Activated CD4-positive, alpha-beta memory T cell treated with anti-CD3 and anti-CD28 coated beads, Interleukin-2, amount 10 ng/mL, durations not matched to agents 7 days and 5 days (primary cell): ENCODE measurements at regions of chr17 and their contacts with region 1.

Region 1: DNA sequence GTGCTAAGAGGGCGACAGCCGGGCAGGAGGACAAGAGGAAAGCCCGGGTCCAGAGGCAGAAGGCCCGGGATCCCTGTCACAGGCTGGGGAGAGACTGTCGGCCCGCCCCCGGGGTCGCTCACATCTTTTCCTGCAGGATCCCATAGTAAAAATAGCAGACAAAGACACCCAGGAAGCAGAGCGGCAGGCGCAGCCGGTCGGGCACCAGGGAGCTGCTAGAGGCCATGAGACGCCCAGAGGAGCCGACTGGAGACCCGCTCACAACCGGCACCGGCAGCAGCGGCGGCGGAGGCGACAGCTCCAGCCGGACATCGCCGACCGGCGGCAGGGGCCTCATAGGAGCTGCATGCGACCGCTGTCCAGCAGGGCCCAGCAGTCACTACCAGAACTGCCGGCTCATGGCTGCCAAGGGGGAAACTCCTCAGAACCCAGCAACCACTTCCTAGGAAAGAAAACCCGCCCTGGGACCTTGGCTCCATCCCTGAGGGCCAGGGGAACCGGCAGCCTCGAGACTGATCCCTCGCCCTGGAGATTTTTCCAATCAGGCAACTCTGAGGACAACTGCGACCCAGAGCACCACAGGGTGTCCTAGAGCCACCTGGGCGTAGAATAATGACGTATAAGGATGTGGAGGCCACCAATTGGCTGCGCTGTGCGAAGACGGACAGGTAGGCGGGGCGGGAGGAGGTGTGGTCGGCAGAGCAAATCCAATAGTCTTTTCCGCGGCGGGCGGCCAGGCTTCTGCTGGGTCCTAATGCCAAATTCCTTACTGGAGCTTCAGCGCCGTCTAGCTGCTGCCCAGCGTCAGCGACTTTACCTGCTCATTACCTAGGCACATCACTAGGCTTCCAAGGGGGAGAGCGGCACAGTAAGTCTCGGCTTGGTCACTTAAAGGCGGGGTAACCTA is at the start of gene SLC35B1:
- DNase-seq: peak; percentile 99
- H3K4me3 Mint-ChIP-seq: peak within 1 kb of the TSS; percentile 90
- H3K27ac Mint-ChIP-seq: peak within 1 kb of the TSS; percentile 93
- H3K4me1 Mint-ChIP-seq: peaks cover 57% of the 10 kb centered on the region
- H3K27me3 Mint-ChIP-seq: no peaks in the 10 kb centered on the region
- total RNA-seq, gene SLC35B1: 50.4 TPM

Region 2: GRCh38 chr17:49471089-49471683 is 236.7 kb before region 1 on chr17:
- CTCF ChIA-PET with region 1: no interaction called
- POLR2A ChIA-PET with region 1: no interaction called
- DNase-seq: no peak
- H3K4me3 Mint-ChIP-seq: no peak overlapping the region
- H3K27ac Mint-ChIP-seq: no peak overlapping the region
- H3K4me1 Mint-ChIP-seq: no peaks in the 10 kb centered on the region
- H3K27me3 Mint-ChIP-seq: peaks cover 68% of the 10 kb centered on the region

Region 3: GRCh38 chr17:49567871-49568694 is 139.8 kb before region 1 on chr17:
- CTCF ChIA-PET with region 1: interaction called, 20 read pairs
- POLR2A ChIA-PET with region 1: interaction called, 12 read pairs
- DNase-seq: peak; percentile 85
- H3K4me3 Mint-ChIP-seq: peak overlapping the region; percentile 63
- H3K27ac Mint-ChIP-seq: no peak overlapping the region
- H3K4me1 Mint-ChIP-seq: peaks cover 32% of the 10 kb centered on the region
- H3K27me3 Mint-ChIP-seq: peaks cover 41% of the 10 kb centered on the region

Region 4: GRCh38 chr17:49727380-49727779 is 19.5 kb after region 1 on chr17:
- CTCF ChIA-PET with region 1: interaction called, 10 read pairs
- POLR2A ChIA-PET with region 1: interaction called, 5 read pairs
- DNase-seq: no peak
- H3K4me3 Mint-ChIP-seq: no peak overlapping the region
- H3K27ac Mint-ChIP-seq: no peak overlapping the region
- H3K4me1 Mint-ChIP-seq: peaks cover 33% of the 10 kb centered on the region
- H3K27me3 Mint-ChIP-seq: no peaks in the 10 kb centered on the region

Region 5: DNA sequence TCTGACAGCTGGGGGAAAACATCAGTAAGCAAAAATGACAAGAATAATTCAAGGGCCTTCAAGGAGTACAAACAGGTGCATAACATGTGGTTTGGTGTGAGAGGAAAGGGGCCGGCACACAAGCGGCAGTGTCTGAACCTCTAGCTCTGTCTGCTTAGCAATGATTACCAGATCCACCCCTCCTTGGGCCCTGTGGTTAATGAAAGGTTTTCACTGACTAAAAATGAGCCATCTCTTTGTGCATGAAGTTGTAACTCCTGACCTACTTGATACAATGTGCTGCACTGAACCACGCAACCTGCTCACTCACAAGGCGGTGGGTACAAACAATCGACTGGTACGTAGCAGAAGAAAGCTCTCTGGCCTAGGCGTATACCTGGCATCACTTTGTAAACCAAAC is 40.9 kb after region 1 on chr17:
- CTCF ChIA-PET with region 1: interaction called, 29 read pairs
- POLR2A ChIA-PET with region 1: interaction called, 100 read pairs
- DNase-seq: peak; percentile 74
- H3K4me3 Mint-ChIP-seq: peak overlapping the region; percentile 51
- H3K27ac Mint-ChIP-seq: peak overlapping the region; percentile 94
- H3K4me1 Mint-ChIP-seq: peaks cover 82% of the 10 kb centered on the region
- H3K27me3 Mint-ChIP-seq: no peaks in the 10 kb centered on the region

Region 6: GRCh38 chr17:49788478-49789242 is 80.8 kb after region 1 on chr17 and contains the start of gene KAT7:
- CTCF ChIA-PET with region 1: interaction called, 37 read pairs
- POLR2A ChIA-PET with region 1: interaction called, 82 read pairs
- DNase-seq: peak; percentile 99
- H3K4me3 Mint-ChIP-seq: peak within 1 kb of the TSS; percentile 94
- H3K27ac Mint-ChIP-seq: peak within 1 kb of the TSS; percentile 97
- H3K4me1 Mint-ChIP-seq: peaks cover 56% of the 10 kb centered on the region
- H3K27me3 Mint-ChIP-seq: peaks cover 2% of the 10 kb centered on the region
- total RNA-seq, gene KAT7: 79.8 to 80.2 TPM